Posterior cingulate gyrus (tissue), 11 donors: ENCODE measurements at regions of chr9 and their contacts with region 1.

Region 1: DNA sequence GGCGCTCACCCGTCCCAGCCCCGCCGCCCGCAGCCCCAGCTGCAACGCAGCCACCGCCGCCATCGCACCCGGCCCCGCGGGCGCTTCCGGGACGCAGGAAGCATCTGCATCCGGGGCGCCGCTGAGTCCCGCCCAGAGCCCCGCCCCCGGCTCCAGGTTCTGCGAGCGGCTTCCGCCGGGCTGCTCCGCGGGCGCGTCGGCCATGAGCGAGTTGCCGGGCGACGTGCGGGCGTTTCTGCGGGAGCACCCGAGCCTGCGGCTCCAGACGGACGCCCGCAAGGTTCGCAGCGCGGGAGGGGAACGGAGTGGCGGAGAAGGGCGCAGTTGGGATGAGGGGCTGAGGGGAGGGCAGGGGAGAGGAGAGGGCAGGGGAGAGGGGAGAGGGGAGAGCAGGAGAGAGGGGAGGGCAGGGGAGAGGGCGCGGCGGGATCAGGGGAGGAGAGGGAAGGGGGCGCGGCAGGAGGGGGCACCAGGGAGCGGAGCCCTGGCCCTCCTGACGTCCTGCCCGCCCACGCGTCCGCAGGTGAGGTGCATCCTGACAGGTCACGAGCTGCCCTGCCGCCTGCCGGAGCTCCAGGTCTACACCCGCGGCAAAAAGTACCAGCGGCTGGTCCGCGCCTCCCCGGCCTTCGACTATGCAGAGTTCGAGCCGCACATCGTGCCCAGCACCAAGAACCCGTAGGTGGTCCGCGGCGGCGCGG is at the starts of genes SURF1 and SURF2:
- DNase-seq: peak; percentile 80 to 98 (median 88)

Region 2: DNA sequence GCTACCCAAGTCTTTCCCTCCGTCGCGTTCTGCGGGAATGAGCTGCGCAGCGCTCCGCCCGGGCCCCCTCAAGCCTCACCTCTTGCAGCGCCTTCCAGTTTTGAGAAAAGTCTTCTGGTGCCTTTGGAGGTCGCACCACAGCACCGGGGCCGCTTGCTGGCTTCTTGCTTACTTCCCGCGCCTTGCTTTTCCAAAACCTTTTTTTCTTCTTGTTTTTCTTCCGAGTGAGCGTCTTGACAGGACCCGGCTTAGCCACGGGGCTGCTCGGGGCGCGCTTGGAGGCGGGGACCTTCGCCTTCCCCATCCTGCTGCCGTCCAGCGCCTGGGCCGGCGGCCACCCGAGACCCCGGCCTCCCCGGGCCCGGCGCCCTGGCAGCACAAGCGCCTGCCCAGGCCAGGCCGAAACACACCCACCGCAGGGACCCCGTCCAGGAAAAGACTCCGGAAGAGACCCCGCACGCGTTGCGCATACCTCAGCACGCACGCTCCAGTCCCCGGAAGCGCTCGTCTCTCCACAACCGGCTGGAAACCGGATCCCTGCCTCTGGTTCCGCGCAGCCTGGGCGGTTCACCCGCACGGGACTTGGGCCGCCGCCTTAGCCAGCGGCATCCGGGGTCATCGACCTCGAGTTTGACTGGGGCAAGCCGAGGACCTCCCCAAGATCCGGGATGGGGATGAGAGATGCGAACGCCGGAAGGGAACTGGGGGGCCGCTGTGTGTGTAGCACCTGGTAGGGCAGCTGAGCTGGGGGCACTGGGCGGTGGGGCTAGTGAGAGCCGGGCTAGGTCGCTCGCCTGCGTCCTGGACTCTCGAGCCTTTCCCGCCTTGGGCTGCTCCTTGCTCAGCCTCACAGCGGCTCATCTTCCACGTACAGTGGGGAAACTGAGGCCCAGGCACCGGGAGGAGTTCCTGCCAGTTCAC is 61.3 kb after region 1 on chr9 and contains the start of gene REXO4:
- intact Hi-C with region 1: loop called (anchors 10 kb)
- DNase-seq: peak; percentile 71 to 96 (median 79)

Region 3: GRCh38 chr9:133478851-133479711 is 122.5 kb after region 1 on chr9 and contains the start of gene SLC2A6:
- intact Hi-C with region 1: loop called (anchors 5 kb)
- DNase-seq: peak; percentile 81 to 99 (median 92)

Region 4: GRCh38 chr9:133629221-133630110 is 272.9 kb after region 1 on chr9:
- intact Hi-C with region 1: no loop called
- DNase-seq: peak in 2 of 10 donors; percentile 55 to 63

Region 5: GRCh38 chr9:133640580-133641395 is 284.2 kb after region 1 on chr9:
- intact Hi-C with region 1: no loop called
- DNase-seq: peak in 2 of 10 donors; percentile 25 to 41